ENCODE measurements at regions of chr18 and their contacts with region 1.

Region 1: DNA sequence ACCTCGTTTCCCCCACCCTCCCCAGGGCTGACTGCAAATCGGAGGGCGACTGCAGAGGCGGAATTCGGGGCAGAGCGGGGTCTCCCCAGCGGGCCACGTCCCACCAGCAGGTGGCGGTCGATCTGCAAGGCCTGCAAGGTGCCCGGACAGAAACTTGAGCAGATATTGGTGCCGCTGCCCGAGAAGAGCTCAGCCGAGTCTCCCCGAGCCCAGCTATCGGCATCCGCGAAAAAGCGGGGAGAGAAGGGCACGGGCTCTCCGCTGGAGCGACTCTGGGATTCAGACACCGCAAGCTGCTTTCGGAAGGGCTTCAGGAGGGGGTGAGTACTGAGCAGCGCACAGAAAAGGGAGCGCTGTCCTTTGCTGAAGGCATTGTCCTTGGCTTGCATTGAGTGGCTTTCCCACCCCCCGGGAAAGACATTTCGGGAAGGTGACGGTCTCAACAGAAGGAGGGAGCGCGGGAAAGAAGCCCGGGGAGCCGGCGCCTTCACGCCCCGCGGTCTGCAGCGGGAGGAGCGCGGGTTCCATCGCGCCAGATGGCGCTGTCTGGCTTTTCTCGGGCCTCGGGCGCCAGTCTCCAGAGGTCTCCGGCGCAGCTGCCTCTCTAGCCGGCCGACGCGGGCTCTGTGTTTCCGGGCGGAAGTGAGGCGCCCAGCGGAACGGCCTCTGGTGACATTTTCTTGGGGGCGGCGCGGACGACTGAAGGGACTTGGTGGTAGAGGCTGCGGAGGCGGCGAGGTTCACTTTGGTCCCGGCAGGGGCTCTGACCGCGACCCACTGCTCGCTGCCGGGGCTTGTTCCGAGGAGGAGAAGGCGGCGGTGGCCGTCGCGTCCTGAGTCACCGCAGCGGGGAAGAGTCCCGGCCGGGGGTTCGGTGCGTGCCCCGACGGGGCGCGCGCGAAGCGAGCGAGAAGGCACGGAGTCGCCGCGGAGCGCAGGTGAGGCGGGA is 69.5 kb downstream of the HAUS1 start:
- DNase-seq: peak; percentile 95
- CTCF ChIP-seq: peak; percentile 91

Region 2: GRCh38 chr18:45910405-45911023 is 263.2 kb before region 1 on chr18:
- CTCF ChIA-PET with region 1: no interaction called
- POLR2A ChIA-PET with region 1: no interaction called
- DNase-seq: peak; percentile 66
- CTCF ChIP-seq: peak; percentile 69

Region 3: GRCh38 chr18:46104128-46104911 is 69.3 kb before region 1 on chr18 and contains the start of gene HAUS1:
- CTCF ChIA-PET with region 1: interaction called, 13 read pairs
- POLR2A ChIA-PET with region 1: interaction called, 3 read pairs
- DNase-seq: peak; percentile 87
- CTCF ChIP-seq: no peak

Region 4: DNA sequence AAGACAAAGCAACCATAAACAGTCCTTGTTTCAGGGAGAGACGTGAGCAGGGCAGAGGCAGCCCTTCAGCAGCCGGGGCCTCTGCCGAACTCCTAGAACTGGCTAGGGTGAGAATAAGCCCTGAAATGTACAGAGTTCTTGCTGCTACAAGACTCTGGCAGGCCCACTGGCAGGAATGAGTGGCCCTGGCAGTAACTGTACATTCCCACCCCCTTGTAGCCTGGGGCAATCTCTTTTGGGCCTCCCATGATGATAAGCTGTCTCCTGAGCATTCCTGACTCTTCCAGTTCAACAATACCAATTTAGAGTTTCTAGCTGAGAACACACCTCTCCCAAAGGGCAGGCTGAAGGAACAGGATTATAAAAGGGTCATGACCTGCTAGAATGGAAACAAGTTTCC is 15.2 kb before region 1 on chr18:
- CTCF ChIA-PET with region 1: interaction called, 35 read pairs
- POLR2A ChIA-PET with region 1: interaction called, 4 read pairs
- DNase-seq: no peak
- CTCF ChIP-seq: no peak

Region 5: GRCh38 chr18:46213295-46213694 is 39.6 kb after region 1 on chr18:
- CTCF ChIA-PET with region 1: interaction called, 37 read pairs
- POLR2A ChIA-PET with region 1: no interaction called
- DNase-seq: peak; percentile 53
- CTCF ChIP-seq: peak; percentile 43

Region 6: GRCh38 chr18:46239549-46239948 is 65.9 kb after region 1 on chr18:
- CTCF ChIA-PET with region 1: interaction called, 20 read pairs
- POLR2A ChIA-PET with region 1: no interaction called
- DNase-seq: no peak
- CTCF ChIP-seq: no peak

Region 7: DNA sequence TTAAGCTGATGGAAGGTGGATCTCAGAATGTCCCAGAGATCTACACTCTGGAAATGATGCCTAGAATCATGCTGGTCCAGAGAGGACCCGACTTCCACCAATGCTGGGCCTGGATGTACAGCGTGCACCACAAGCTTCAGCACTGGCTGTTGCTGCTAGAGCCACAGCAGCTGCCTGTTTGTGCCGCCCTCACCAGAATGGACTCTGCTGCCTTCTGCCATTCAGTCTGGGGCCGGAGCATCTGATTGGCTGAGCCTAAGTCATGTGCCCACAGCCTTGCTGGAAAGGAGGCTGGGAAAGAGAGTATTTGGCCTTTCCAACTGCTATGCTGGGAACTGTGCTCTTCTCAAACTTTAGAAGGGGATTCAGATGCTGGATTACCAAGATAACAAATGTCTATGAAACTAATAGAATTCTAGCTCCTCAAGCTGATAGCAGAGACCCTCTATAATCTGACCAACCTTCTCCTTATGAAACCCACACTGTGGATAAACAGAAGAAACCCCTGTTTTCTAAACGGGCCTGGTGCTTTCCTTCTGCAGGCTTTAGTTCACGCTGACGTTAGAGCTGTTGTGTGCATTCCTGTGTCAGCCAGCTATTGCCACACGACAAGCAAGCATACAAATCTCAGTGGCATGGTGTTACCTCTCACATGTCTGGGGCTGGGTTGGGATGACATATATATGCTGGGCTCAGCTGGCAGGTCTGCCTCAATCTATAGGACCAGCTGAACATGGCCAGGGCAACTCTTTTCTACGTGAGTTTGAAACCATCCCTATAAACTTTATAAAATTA is 487.5 kb after region 1 on chr18:
- CTCF ChIA-PET with region 1: interaction called, 33 read pairs
- POLR2A ChIA-PET with region 1: no interaction called
- DNase-seq: no peak
- CTCF ChIP-seq: no peak